ENCODE measurements at regions of chr5 and their contacts with region 1.

Region 1: GRCh38 chr5:43105369-43106289 is 15.1 kb upstream of the ZNF131 start:
- DNase-seq: peak; percentile 87 to 90 (median 88)
- H3K4me3 ChIP-seq: peak overlapping the region; percentile 62 to 87
- H3K4me3 Mint-ChIP-seq: peak overlapping the region; percentile 85 to 94 (median 88)
- H3K27ac ChIP-seq: peak overlapping the region; percentile 44
- H3K27ac Mint-ChIP-seq: peak overlapping the region; percentile 84 to 94 (median 92)
- H3K4me1 ChIP-seq: peaks cover 43% of the 10 kb centered on the region
- H3K4me1 Mint-ChIP-seq: peaks cover 28 to 45% (median 37%) of the 10 kb centered on the region in 4 donors
- H3K27me3 ChIP-seq: no peaks in the 10 kb centered on the region
- H3K27me3 Mint-ChIP-seq: no peaks in the 10 kb centered on the region

Region 2: DNA sequence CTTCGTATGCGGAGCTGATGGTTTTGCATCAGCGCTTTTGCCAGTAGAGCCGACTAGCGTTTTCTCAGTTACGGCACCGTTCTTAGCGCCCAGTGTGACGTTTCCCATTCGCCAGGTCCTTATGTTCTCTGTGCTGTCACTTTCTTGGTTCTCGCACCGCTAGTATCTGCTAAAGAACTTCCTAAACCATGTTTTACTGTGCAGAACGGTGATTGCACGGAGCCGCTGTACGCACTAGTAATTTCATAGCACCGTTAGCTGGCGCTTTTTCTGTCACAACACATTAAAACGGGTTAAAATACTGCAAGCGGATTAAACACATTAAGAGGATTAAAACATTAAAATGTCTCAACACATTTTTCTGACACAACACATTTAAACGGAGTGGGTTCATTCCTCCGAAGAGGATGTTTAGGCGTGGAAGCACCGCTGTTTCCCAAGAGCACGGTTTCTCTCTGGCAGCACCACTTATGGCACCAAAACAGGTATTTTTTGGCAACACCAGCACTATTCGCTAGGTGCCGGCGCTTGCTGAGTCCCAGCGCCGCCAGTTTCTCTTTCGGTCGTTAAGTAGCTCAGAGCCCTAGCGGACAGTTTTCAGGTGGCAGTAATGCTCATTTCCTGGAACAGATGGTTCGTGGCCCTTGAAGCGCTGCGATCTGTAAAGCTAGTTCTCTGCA is 85.9 kb before region 1 on chr5:
- CTCF ChIA-PET with region 1: interaction called, 12 read pairs
- POLR2A ChIA-PET with region 1: interaction called, 9 read pairs
- intact Hi-C with region 1: no loop called
- DNase-seq: peak; percentile 84 to 94 (median 91)
- H3K4me3 ChIP-seq: peak overlapping the region; percentile 73 to 83
- H3K4me3 Mint-ChIP-seq: peak overlapping the region; percentile 94 to 99 (median 98)
- H3K27ac ChIP-seq: peak overlapping the region; percentile 94
- H3K27ac Mint-ChIP-seq: peak overlapping the region; percentile 99 to 100 (median 100)
- H3K4me1 ChIP-seq: peaks cover 40% of the 10 kb centered on the region
- H3K4me1 Mint-ChIP-seq: peaks cover 24 to 67% (median 34%) of the 10 kb centered on the region in 4 donors
- H3K27me3 ChIP-seq: no peaks in the 10 kb centered on the region
- H3K27me3 Mint-ChIP-seq: no peaks in the 10 kb centered on the region

Region 3: GRCh38 chr5:43073597-43074546 is 31.8 kb before region 1 on chr5:
- CTCF ChIA-PET with region 1: interaction called, 15 read pairs
- POLR2A ChIA-PET with region 1: interaction called, 34 read pairs
- intact Hi-C with region 1: loop called (anchors 1 kb)
- DNase-seq: peak; percentile 64 to 73 (median 67)
- H3K4me3 ChIP-seq: no peak overlapping the region
- H3K4me3 Mint-ChIP-seq: peak overlapping the region in 1 of 8 donors; percentile 17
- H3K27ac ChIP-seq: no peak overlapping the region
- H3K27ac Mint-ChIP-seq: peak overlapping the region; percentile 5 to 71 (median 59)
- H3K4me1 ChIP-seq: peaks cover 46% of the 10 kb centered on the region
- H3K4me1 Mint-ChIP-seq: peaks cover 29 to 72% (median 42%) of the 10 kb centered on the region in 4 donors
- H3K27me3 ChIP-seq: no peaks in the 10 kb centered on the region
- H3K27me3 Mint-ChIP-seq: no peaks in the 10 kb centered on the region

Region 4: GRCh38 chr5:43140286-43140685 is 34.7 kb after region 1 on chr5:
- CTCF ChIA-PET with region 1: interaction called, 3 read pairs
- POLR2A ChIA-PET with region 1: no interaction called
- intact Hi-C with region 1: loop called (anchors 2 kb)
- DNase-seq: peak in 4 of 5 donors; percentile 21 to 46 (median 29)
- H3K4me3 ChIP-seq: no peak overlapping the region
- H3K4me3 Mint-ChIP-seq: peak overlapping the region in 4 of 8 donors; percentile 8 to 53 (median 22)
- H3K27ac ChIP-seq: no peak overlapping the region
- H3K27ac Mint-ChIP-seq: peak overlapping the region in 6 of 7 donors; percentile 20 to 65 (median 41)
- H3K4me1 ChIP-seq: peaks cover 43% of the 10 kb centered on the region
- H3K4me1 Mint-ChIP-seq: peaks cover 38 to 60% (median 50%) of the 10 kb centered on the region in 4 donors
- H3K27me3 ChIP-seq: no peaks in the 10 kb centered on the region
- H3K27me3 Mint-ChIP-seq: no peaks in the 10 kb centered on the region

Measured in CD4-positive, alpha-beta memory T cell (primary cell).